Caco-2 (cell line): ENCODE measurements at regions of chr11 and their contacts with region 1.

Region 1: GRCh38 chr11:64317957-64318693 is at the start of gene PRDX5:
- DNase-seq: peak; percentile 98
- H3K4me3 ChIP-seq: peak within 1 kb of the TSS; percentile 70
- H3K4me3 Mint-ChIP-seq: peak within 1 kb of the TSS; percentile 84
- H3K27ac Mint-ChIP-seq: peak within 1 kb of the TSS; percentile 97
- H3K4me1 ChIP-seq: peaks cover 21% of the 10 kb centered on the region
- H3K4me1 Mint-ChIP-seq: peaks cover 28% of the 10 kb centered on the region
- H3K27me3 ChIP-seq: no peaks in the 10 kb centered on the region
- H3K27me3 Mint-ChIP-seq: no peaks in the 10 kb centered on the region
- CTCF ChIP-seq: peak in 1 of 2 experiments; percentile 56
- total RNA-seq, gene PRDX5: 269 and 306 TPM in 2 replicates

Region 2: DNA sequence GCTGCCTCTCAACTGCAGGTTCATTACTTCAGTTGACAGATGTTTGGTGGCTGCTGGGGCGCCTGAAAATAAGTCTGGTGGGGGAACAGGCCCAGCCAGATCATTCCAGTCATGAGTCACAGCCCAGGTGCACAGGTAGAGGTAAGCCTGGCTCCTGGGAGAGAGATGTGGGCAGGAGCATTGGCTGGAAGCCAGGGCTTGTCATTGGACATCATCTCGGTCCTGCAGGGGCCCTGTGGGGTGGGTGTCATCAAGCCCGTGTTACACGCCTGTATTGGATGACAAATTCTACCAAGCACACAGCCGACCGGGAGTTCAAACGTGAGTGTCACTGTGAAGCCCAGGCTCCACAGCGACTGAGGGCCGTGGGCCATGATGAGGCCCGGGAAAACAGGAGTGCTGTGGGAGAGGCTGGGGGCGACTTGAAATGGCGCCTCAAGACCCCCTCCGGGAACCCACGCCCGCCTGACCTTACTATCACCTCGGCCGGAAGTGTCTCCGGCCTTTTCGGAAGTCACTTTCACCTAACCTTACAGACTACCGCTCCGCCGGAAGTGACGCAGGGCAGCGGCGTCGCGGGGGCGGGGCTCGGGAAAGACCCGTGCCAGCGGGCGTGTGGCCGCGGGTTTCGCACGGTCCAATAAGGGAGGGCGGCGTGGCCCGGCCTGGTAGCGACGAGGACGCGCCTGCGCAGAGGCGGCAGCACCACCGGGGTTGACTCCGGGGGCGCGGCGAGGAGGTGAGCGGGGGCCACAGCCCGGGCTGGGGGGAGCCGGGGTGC is 77.5 kb before region 1 on chr11 and contains the start of gene FKBP2:
- CTCF ChIA-PET with region 1: no interaction called
- POLR2A ChIA-PET with region 1: interaction called, 15 read pairs
- intact Hi-C with region 1: no loop called
- DNase-seq: peak; percentile 97 to 99
- H3K4me3 ChIP-seq: peak within 1 kb of the TSS; percentile 95
- H3K4me3 Mint-ChIP-seq: peak within 1 kb of the TSS; percentile 88
- H3K27ac Mint-ChIP-seq: peak within 1 kb of the TSS; percentile 90
- H3K4me1 ChIP-seq: peaks cover 20% of the 10 kb centered on the region
- H3K4me1 Mint-ChIP-seq: peaks cover 15% of the 10 kb centered on the region
- H3K27me3 ChIP-seq: no peaks in the 10 kb centered on the region
- H3K27me3 Mint-ChIP-seq: no peaks in the 10 kb centered on the region
- CTCF ChIP-seq: no peak
- total RNA-seq, gene FKBP2: 70.2 and 76.8 TPM in 2 replicates

Region 3: DNA sequence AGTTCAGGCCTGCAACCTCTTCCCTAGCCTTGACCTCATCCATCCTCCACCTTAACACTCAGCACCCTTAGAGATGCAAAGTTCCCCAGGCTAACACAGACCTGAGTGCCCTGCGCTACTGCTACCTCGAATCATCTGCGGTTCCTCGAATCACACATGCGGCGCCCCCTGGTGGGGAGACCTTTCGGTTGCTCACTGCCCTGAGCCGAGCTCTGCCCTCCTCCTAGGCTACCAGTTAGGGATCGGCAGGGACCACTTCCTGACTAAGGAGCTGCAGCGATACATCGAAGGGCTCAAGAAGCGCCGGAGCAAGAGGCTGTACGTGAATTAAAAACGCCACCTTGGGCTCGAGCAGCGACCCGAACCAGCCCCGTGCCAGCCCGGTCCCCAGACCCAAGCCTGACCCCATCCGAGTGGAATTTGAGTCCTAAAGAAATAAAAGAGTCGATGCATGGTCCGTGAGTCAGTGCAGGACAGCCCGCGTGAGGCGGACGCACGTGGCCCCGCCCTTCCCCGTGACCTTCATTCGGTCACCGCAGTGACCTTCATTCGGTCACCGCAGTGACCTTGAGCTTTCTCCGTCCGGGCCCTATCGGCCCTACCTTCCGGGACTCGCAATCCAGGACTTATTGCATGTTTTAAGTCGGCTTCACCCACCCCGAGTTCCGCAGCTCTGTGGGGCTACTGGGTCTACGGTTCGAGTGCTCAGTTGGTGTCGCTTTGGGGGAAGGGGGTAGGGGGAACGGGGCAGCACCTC is 13.6 kb before region 1 on chr11:
- CTCF ChIA-PET with region 1: interaction called, 61 read pairs
- POLR2A ChIA-PET with region 1: interaction called, 86 read pairs
- intact Hi-C with region 1: loop called (anchors 1 kb)
- DNase-seq: peak; percentile 93 to 95
- H3K4me3 ChIP-seq: peak overlapping the region; percentile 65
- H3K4me3 Mint-ChIP-seq: peak overlapping the region; percentile 97
- H3K27ac Mint-ChIP-seq: peak overlapping the region; percentile 99
- H3K4me1 ChIP-seq: peaks cover 28% of the 10 kb centered on the region
- H3K4me1 Mint-ChIP-seq: peaks cover 9% of the 10 kb centered on the region
- H3K27me3 ChIP-seq: no peaks in the 10 kb centered on the region
- H3K27me3 Mint-ChIP-seq: no peaks in the 10 kb centered on the region
- CTCF ChIP-seq: peak; percentile 87 to 97

Region 4: GRCh38 chr11:64341851-64342791 is 24.0 kb after region 1 on chr11:
- CTCF ChIA-PET with region 1: interaction called, 16 read pairs
- POLR2A ChIA-PET with region 1: interaction called, 3 read pairs
- intact Hi-C with region 1: no loop called
- DNase-seq: no peak
- H3K4me3 ChIP-seq: no peak overlapping the region
- H3K4me3 Mint-ChIP-seq: no peak overlapping the region
- H3K27ac Mint-ChIP-seq: no peak overlapping the region
- H3K4me1 ChIP-seq: no peaks in the 10 kb centered on the region
- H3K4me1 Mint-ChIP-seq: peaks cover 2% of the 10 kb centered on the region
- H3K27me3 ChIP-seq: no peaks in the 10 kb centered on the region
- H3K27me3 Mint-ChIP-seq: no peaks in the 10 kb centered on the region
- CTCF ChIP-seq: no peak

Region 5: GRCh38 chr11:64372802-64373597 is 54.9 kb after region 1 on chr11:
- CTCF ChIA-PET with region 1: interaction called, 5 read pairs
- POLR2A ChIA-PET with region 1: interaction called, 11 read pairs
- intact Hi-C with region 1: no loop called
- DNase-seq: peak; percentile 94 to 97
- H3K4me3 ChIP-seq: peak overlapping the region; percentile 42
- H3K4me3 Mint-ChIP-seq: peak overlapping the region; percentile 88
- H3K27ac Mint-ChIP-seq: peak overlapping the region; percentile 88
- H3K4me1 ChIP-seq: 0 out of 2 replicates have a peak, but pooled peaks cover 3% of the 10 kb centered on the region
- H3K4me1 Mint-ChIP-seq: peaks cover 7% of the 10 kb centered on the region
- H3K27me3 ChIP-seq: no peaks in the 10 kb centered on the region
- H3K27me3 Mint-ChIP-seq: no peaks in the 10 kb centered on the region
- CTCF ChIP-seq: no peak

Region 6: DNA sequence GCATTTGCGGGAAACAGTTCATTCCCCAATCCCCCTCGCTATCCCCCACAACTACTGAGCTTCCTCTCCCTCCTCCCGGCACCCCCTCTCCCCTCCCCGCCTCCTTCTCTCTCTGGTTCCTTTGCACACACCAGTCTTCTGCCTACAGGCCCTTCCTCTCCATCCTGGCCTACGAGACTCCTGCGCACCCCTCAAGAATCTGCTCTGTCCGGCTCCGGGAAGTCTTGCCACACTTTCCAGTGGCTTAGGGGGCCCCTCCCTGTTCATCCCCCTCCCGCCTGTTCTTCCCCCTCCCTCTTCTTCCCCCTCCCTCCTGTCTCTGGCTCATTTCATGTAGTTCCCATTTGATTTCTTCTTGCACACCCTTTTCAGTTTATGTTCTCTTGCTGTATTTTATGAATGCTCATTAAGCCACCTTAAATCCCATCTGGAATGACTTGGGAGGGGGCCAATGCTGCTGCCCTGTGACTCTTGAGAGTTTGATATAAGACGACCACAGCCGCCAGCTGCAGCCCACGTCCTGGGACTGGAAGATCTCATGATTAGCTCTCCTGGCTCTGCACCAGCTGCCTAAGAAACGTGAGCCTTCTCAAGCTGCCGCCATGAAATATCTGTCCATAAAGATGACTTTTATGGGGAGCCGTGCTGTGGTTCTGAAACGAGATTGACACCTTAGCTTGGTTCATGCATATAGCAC is 91.7 kb after region 1 on chr11:
- CTCF ChIA-PET with region 1: interaction called, 19 read pairs
- POLR2A ChIA-PET with region 1: interaction called, 15 read pairs
- intact Hi-C with region 1: loop called (anchors 5 kb)
- DNase-seq: no peak
- H3K4me3 ChIP-seq: no peak overlapping the region
- H3K4me3 Mint-ChIP-seq: no peak overlapping the region
- H3K27ac Mint-ChIP-seq: peak overlapping the region; percentile 76
- H3K4me1 ChIP-seq: peaks cover 48% of the 10 kb centered on the region
- H3K4me1 Mint-ChIP-seq: peaks cover 37% of the 10 kb centered on the region
- H3K27me3 ChIP-seq: no peaks in the 10 kb centered on the region
- H3K27me3 Mint-ChIP-seq: no peaks in the 10 kb centered on the region
- CTCF ChIP-seq: no peak

Region 7: GRCh38 chr11:64523456-64524151 is 205.5 kb after region 1 on chr11:
- CTCF ChIA-PET with region 1: no interaction called
- POLR2A ChIA-PET with region 1: no interaction called
- intact Hi-C with region 1: no loop called
- DNase-seq: peak in 1 of 2 experiments; percentile 3
- H3K4me3 ChIP-seq: no peak overlapping the region
- H3K4me3 Mint-ChIP-seq: no peak overlapping the region
- H3K27ac Mint-ChIP-seq: no peak overlapping the region
- H3K4me1 ChIP-seq: peaks cover 8% of the 10 kb centered on the region; the same call in 1 of the 2 replicates
- H3K4me1 Mint-ChIP-seq: no peaks in the 10 kb centered on the region
- H3K27me3 ChIP-seq: no peaks in the 10 kb centered on the region
- H3K27me3 Mint-ChIP-seq: peaks cover 10% of the 10 kb centered on the region
- CTCF ChIP-seq: no peak

Region 8: GRCh38 chr11:64652586-64653387 is 334.7 kb after region 1 on chr11:
- CTCF ChIA-PET with region 1: interaction called, 10 read pairs
- POLR2A ChIA-PET with region 1: no interaction called
- intact Hi-C with region 1: loop called (anchors 2 kb)
- DNase-seq: peak; percentile 86 to 93
- H3K4me3 ChIP-seq: no peak overlapping the region
- H3K4me3 Mint-ChIP-seq: no peak overlapping the region
- H3K27ac Mint-ChIP-seq: no peak overlapping the region
- H3K4me1 ChIP-seq: peaks cover 17% of the 10 kb centered on the region
- H3K4me1 Mint-ChIP-seq: peaks cover 15% of the 10 kb centered on the region
- H3K27me3 ChIP-seq: no peaks in the 10 kb centered on the region
- H3K27me3 Mint-ChIP-seq: no peaks in the 10 kb centered on the region
- CTCF ChIP-seq: peak; percentile 91 to 93